CD8-positive, alpha-beta T cell (primary cell): ENCODE measurements at regions of chr9 and their contacts with region 1.

Region 1: DNA sequence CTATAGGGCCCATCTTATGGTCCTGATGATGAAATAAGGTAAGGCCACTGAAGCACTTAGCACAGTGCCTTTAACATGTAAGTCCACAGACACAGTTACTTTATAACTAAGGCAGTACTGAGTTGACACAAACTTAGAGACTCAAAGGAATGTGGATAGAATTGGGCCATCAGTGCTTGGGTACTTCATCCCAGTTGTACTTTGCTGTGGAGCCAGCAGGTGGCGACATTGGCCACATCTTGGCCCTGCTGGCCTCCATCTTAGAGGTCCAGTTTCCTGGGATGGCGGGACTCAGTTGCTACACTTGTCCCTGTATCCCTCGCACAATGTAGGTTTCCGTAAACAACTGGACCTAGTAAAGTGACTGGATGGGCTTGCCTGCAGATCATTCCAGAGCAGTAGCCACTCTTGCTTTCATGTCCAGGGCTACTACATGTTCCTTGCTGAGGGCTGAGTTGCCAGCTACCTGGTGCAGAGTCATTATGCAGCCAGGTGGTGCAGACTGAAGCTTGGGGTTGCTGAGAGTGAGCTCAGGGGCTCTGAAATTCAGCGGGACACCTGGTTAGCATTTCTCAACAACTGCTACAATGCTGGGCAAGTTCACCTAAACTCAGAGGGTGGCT is 10.6 kb downstream of the MTAP start:
- DNase-seq: peak; percentile 21 to 80 (median 66)
- ATAC-seq: peak; percentile 85
- H3K4me3 ChIP-seq: no peak overlapping the region
- H3K4me3 Mint-ChIP-seq: no peak overlapping the region
- H3K27ac ChIP-seq: no peak overlapping the region
- H3K27ac Mint-ChIP-seq: peak overlapping the region; percentile 22
- H3K4me1 ChIP-seq: peaks cover 10% of the 10 kb centered on the region
- H3K4me1 Mint-ChIP-seq: peaks cover 22% of the 10 kb centered on the region
- H3K27me3 ChIP-seq: no peaks in the 10 kb centered on the region
- H3K27me3 Mint-ChIP-seq: no peaks in the 10 kb centered on the region
- CTCF ChIP-seq: peak; percentile 66

Region 2: DNA sequence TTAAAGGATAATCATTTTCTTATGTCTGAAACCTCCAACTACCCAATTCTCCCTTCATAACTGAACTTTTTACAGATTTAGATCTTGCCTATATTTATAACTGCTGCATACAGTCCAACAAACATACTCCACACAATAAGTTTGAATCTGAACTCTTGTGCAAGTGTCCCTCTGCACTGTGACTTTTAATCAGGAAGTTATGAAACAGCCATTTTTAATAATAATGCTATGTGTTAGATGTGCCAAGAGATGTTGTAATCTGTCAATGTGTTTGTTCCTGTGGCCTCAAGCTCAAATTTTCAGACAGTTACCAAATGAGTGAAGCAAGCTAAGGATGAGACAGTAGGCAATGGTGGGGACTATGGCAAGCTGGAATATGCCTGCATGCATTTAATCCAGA is 68.2 kb before region 1 on chr9:
- CTCF ChIA-PET with region 1: no interaction called
- POLR2A ChIA-PET with region 1: no interaction called
- intact Hi-C with region 1: no loop called
- DNase-seq: no peak
- ATAC-seq: no peak
- H3K4me3 ChIP-seq: no peak overlapping the region
- H3K4me3 Mint-ChIP-seq: no peak overlapping the region
- H3K27ac ChIP-seq: no peak overlapping the region
- H3K27ac Mint-ChIP-seq: no peak overlapping the region
- H3K4me1 ChIP-seq: no peaks in the 10 kb centered on the region
- H3K4me1 Mint-ChIP-seq: no peaks in the 10 kb centered on the region
- H3K27me3 ChIP-seq: peaks cover 0 to 2% of the 10 kb centered on the region in 2 experiments
- H3K27me3 Mint-ChIP-seq: peaks cover 9% of the 10 kb centered on the region
- CTCF ChIP-seq: no peak

Region 3: DNA sequence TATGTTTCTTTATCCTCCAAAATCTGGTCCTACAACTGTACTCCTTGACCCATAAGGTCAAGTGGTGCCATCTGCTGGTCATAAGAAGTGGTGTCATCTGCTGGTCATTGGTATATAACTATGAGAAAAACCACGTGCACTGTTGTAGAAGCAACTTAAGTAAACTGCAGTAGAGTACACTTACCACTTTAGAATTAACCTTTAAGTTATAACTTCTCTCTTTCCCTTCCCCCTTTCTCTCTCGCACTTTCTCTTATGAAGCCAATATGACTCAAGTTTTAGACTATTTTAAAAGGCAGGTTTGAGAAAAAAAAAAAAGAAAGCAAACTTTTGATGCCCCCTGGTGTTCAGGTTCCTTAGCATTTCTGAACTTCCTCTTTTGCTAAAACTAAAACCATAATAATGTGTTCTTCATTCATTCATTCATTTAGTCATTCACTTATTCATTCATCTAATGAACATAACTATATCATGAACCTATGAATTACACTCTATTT is 23.5 kb before region 1 on chr9:
- CTCF ChIA-PET with region 1: no interaction called
- POLR2A ChIA-PET with region 1: no interaction called
- intact Hi-C with region 1: no loop called
- DNase-seq: peak in 6 of 9 experiments; percentile 46 to 89 (median 62)
- ATAC-seq: peak; percentile 94
- H3K4me3 ChIP-seq: peak overlapping the region; percentile 18 to 33
- H3K4me3 Mint-ChIP-seq: peak overlapping the region; percentile 80
- H3K27ac ChIP-seq: no peak overlapping the region
- H3K27ac Mint-ChIP-seq: peak overlapping the region; percentile 71
- H3K4me1 ChIP-seq: no peaks in the 10 kb centered on the region
- H3K4me1 Mint-ChIP-seq: no peaks in the 10 kb centered on the region
- H3K27me3 ChIP-seq: no peaks in the 10 kb centered on the region
- H3K27me3 Mint-ChIP-seq: peaks cover 8% of the 10 kb centered on the region
- CTCF ChIP-seq: peak; percentile 86

Region 4: DNA sequence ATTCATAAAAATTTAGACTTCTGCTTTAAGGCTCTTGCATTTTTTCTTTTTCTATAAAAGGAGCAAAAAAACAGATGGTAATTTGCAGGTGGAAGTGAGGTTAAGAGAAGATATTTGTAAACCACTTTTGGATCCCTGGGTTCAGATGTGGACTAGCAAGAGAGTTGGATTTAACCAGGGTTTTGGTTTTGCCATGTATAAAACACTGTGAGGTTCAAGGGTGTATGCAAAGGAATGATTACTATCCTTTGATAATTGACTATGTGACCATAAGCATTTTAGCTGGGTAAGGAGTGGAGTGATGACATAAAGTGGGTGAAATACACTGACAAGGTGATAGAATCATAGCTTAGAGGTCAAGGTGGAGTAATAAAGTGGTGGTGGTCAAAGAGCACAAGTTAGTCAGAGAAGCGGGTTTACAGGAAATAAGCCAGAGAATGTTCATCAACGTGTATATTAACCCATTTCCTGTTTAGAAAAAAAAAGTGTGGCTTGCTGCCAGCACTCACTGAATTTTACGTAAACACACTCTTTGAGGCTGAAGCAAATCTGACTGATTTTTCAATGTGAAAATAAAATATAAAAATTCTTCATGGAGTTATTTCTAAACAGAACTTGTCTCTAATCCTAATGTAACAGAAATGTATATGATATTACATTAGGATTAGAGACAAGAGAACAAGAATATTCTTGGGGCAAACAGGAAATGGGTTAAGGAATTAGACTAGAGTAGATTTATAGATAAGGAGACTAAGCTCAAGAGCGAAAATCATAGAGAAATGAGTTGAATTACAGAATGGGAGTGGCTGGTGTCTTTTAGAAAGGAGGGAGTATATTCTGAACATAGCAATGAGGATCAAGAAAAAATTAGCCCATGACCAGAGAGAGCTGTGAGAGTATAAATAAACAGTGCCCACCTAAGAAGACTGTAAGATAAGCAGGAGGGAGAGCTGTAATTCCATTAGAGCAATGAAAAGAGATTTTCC is 106.6 kb after region 1 on chr9:
- CTCF ChIA-PET with region 1: no interaction called
- POLR2A ChIA-PET with region 1: no interaction called
- intact Hi-C with region 1: loop called in 1 of 2 experiments (anchors 5 kb)
- DNase-seq: peak in 7 of 9 experiments; percentile 4 to 81 (median 30)
- ATAC-seq: peak; percentile 81
- H3K4me3 ChIP-seq: no peak overlapping the region
- H3K4me3 Mint-ChIP-seq: peak overlapping the region; percentile 24
- H3K27ac ChIP-seq: peak overlapping the region in 1 of 2 experiments; percentile 60
- H3K27ac Mint-ChIP-seq: peak overlapping the region; percentile 75
- H3K4me1 ChIP-seq: peaks cover 10% of the 10 kb centered on the region
- H3K4me1 Mint-ChIP-seq: peaks cover 19% of the 10 kb centered on the region
- H3K27me3 ChIP-seq: no peaks in the 10 kb centered on the region
- H3K27me3 Mint-ChIP-seq: no peaks in the 10 kb centered on the region
- CTCF ChIP-seq: no peak

Region 5: GRCh38 chr9:22008736-22009562 is 195.9 kb after region 1 on chr9 and contains the start of gene CDKN2B:
- CTCF ChIA-PET with region 1: interaction called, 145 read pairs
- POLR2A ChIA-PET with region 1: interaction called, 3 read pairs
- intact Hi-C with region 1: loop called (anchors 1 kb)
- DNase-seq: peak; percentile 25 to 84 (median 59)
- ATAC-seq: peak; percentile 60
- H3K4me3 ChIP-seq: peak within 1 kb of the TSS; percentile 45 to 57
- H3K4me3 Mint-ChIP-seq: peak within 1 kb of the TSS; percentile 74
- H3K27ac ChIP-seq: no peak within 1 kb of the TSS
- H3K27ac Mint-ChIP-seq: no peak within 1 kb of the TSS
- H3K4me1 ChIP-seq: peaks cover 29% of the 10 kb centered on the region
- H3K4me1 Mint-ChIP-seq: peaks cover 20% of the 10 kb centered on the region
- H3K27me3 ChIP-seq: peaks cover 43 to 46% of the 10 kb centered on the region in 2 experiments
- H3K27me3 Mint-ChIP-seq: peaks cover 54% of the 10 kb centered on the region
- CTCF ChIP-seq: peak; percentile 69
- total RNA-seq, gene CDKN2B: not detected

Region 6: DNA sequence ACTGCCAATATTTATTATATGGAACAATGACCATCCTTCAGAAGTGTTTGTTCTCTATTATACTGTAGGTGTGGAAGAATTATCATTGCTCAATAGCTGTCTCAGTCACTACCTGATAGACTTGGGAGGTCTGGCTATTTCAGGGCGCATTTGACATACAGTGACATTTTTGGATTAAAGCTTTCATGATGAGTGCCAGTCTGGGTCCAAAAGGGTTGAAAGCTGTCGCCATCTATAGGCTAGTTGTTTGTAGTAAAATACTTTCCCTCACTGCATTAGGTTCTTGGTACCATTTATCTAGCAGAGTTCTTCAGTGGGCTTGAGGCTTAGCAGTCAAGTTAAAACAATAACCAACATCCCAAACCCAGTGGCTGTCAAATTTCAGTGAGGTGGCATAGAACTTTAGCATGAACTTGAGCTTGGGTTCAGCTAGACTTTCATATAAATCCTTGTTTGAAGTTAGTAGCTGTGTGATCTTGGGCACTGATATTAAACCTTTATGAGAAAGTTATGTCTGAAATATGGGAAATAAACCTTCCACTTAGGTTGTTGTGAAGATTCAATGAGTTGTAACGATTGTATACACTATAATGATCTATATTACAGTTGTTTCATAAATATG is 306.6 kb after region 1 on chr9:
- CTCF ChIA-PET with region 1: interaction called, 11 read pairs
- POLR2A ChIA-PET with region 1: no interaction called
- intact Hi-C with region 1: loop called (anchors 1 to 2 kb)
- DNase-seq: peak in 2 of 9 experiments; percentile 35 to 45
- ATAC-seq: no peak
- H3K4me3 ChIP-seq: no peak overlapping the region
- H3K4me3 Mint-ChIP-seq: no peak overlapping the region
- H3K27ac ChIP-seq: no peak overlapping the region
- H3K27ac Mint-ChIP-seq: no peak overlapping the region
- H3K4me1 ChIP-seq: no peaks in the 10 kb centered on the region
- H3K4me1 Mint-ChIP-seq: no peaks in the 10 kb centered on the region
- H3K27me3 ChIP-seq: no peaks in the 10 kb centered on the region
- H3K27me3 Mint-ChIP-seq: peaks cover 8% of the 10 kb centered on the region
- CTCF ChIP-seq: peak; percentile 24

Region 7: DNA sequence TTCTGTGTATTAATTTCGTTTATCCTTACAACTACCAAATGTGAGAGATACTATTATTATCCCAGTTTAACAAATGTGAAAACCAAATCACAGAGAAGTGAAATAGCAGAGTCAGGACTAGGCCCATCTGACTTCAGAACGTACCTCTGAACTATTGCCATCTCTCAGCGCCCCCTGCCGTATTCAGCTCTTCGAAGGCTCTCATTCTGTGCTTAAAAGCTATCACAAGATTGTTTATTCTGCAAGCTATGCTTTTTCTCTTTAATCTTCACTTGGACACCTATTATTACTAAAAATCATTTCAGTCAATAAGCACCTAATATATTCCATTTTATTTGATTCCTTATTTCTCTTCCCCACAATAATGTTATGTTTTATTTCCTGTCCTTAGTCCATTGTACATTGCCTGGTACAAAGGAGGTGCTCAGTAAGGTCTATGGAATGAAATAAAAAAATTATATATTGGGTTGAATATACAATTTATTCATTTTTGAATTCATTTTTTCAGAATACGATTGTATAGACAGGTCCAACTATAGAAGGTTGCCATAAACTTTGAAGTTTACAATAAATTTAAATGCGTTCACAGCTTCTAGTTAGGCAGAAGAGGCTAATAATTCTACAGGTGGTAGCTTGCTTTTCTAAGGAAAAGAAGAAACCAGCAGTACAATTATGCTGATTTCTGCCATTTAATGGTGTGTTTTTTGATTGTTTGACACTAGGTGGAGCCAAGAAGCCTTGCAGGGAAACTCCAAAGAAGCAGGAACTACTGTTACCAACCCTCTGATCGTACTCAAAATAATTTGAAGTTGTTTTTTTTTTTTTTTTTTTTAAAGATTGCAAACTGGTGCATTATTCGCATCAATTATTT is 431.3 kb after region 1 on chr9:
- CTCF ChIA-PET with region 1: interaction called, 5 read pairs
- POLR2A ChIA-PET with region 1: no interaction called
- intact Hi-C with region 1: loop called in 1 of 2 experiments (anchors 5 kb)
- DNase-seq: peak in 3 of 9 experiments; percentile 21 to 58 (median 31)
- ATAC-seq: peak; percentile 56
- H3K4me3 ChIP-seq: no peak overlapping the region
- H3K4me3 Mint-ChIP-seq: peak overlapping the region; percentile 13
- H3K27ac ChIP-seq: no peak overlapping the region
- H3K27ac Mint-ChIP-seq: no peak overlapping the region
- H3K4me1 ChIP-seq: no peaks in the 10 kb centered on the region
- H3K4me1 Mint-ChIP-seq: peaks cover 2% of the 10 kb centered on the region
- H3K27me3 ChIP-seq: no peaks in the 10 kb centered on the region
- H3K27me3 Mint-ChIP-seq: peaks cover 4% of the 10 kb centered on the region
- CTCF ChIP-seq: peak; percentile 40